Naive thymus-derived CD4-positive, alpha-beta T cell (primary cell): ENCODE measurements at regions of chr7 and their contacts with region 1.

Region 1: GRCh38 chr7:142796608-142797385 is 26.0 kb downstream of the PRSS2 start:
- DNase-seq: peak in 3 of 9 donors; percentile 25 to 45 (median 40)
- ATAC-seq: peak; percentile 2
- H3K4me3 ChIP-seq: peak overlapping the region; percentile 83
- H3K4me3 Mint-ChIP-seq: peak overlapping the region; percentile 95 to 100 (median 99)
- H3K27ac ChIP-seq: peak overlapping the region; percentile 98
- H3K27ac Mint-ChIP-seq: peak overlapping the region; percentile 99 to 100 (median 100)
- H3K4me1 ChIP-seq: peaks cover 43 to 45% of the 10 kb centered on the region in 2 donors
- H3K4me1 Mint-ChIP-seq: peaks cover 29 to 70% (median 67%) of the 10 kb centered on the region in 7 donors
- H3K27me3 ChIP-seq: no peaks in the 10 kb centered on the region
- H3K27me3 Mint-ChIP-seq: peaks cover 0 to 2% (median 0%) of the 10 kb centered on the region in 5 donors

Region 2: GRCh38 chr7:142345811-142346210 is 451.0 kb before region 1 on chr7:
- CTCF ChIA-PET with region 1: no interaction called
- POLR2A ChIA-PET with region 1: interaction called, 66 read pairs
- intact Hi-C with region 1: no loop called
- DNase-seq: peak in 5 of 9 donors; percentile 43 to 61 (median 50)
- ATAC-seq: peak; percentile 67
- H3K4me3 ChIP-seq: peak overlapping the region; percentile 21
- H3K4me3 Mint-ChIP-seq: peak overlapping the region in 7 of 10 donors; percentile 11 to 73 (median 69)
- H3K27ac ChIP-seq: peak overlapping the region; percentile 2
- H3K27ac Mint-ChIP-seq: peak overlapping the region in 7 of 9 donors; percentile 1 to 79 (median 40)
- H3K4me1 ChIP-seq: peaks cover 20 to 26% of the 10 kb centered on the region in 2 donors
- H3K4me1 Mint-ChIP-seq: peaks cover 3 to 42% (median 9%) of the 10 kb centered on the region in 7 donors
- H3K27me3 ChIP-seq: no peaks in the 10 kb centered on the region
- H3K27me3 Mint-ChIP-seq: peaks cover 0 to 26% (median 0%) of the 10 kb centered on the region in 5 donors

Region 3: DNA sequence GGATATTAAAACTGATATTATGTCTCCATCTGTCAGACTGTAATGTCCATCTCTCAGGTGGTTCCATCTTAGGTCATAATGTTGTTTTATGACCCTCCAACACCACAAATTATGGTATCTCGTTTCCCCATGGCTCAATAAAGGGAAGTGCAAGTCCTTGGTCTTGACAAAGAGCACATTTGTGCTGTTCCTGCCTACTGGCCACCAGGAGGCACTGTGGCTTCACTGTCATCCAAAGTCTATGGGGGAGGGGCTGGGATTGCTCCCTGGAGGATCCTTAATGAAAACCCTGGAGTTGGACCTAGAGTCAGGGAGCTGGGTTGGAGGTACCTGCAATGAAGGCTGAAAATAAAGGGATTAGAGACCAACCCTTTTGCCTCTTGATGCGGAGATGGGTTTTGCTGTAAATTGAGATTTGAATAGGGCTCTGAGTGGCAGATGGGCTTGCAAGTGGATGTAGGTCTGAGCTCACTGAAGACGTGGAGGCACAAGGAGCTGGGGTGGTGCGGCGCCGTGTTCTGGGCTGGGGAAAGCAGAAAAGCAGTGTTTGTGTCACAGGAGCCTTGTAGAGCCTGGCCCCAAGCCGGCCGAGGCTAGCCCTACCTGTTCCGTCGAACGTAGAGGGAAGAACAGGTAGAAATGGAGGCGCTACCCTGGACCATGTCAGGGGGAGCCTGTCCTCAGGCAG is 358.4 kb before region 1 on chr7:
- CTCF ChIA-PET with region 1: no interaction called
- POLR2A ChIA-PET with region 1: interaction called, 12 read pairs
- intact Hi-C with region 1: no loop called
- DNase-seq: peak in 4 of 9 donors; percentile 25 to 37 (median 31)
- ATAC-seq: peak; percentile 71
- H3K4me3 ChIP-seq: no peak overlapping the region
- H3K4me3 Mint-ChIP-seq: peak overlapping the region in 2 of 10 donors; percentile 0 to 4
- H3K27ac ChIP-seq: no peak overlapping the region
- H3K27ac Mint-ChIP-seq: peak overlapping the region in 2 of 9 donors; percentile 8 to 11
- H3K4me1 ChIP-seq: peaks cover 6 to 26% of the 10 kb centered on the region in 2 donors
- H3K4me1 Mint-ChIP-seq: peaks cover 39 to 70% (median 66%) of the 10 kb centered on the region in 7 donors
- H3K27me3 ChIP-seq: no peaks in the 10 kb centered on the region
- H3K27me3 Mint-ChIP-seq: no peaks in the 10 kb centered on the region

Region 4: DNA sequence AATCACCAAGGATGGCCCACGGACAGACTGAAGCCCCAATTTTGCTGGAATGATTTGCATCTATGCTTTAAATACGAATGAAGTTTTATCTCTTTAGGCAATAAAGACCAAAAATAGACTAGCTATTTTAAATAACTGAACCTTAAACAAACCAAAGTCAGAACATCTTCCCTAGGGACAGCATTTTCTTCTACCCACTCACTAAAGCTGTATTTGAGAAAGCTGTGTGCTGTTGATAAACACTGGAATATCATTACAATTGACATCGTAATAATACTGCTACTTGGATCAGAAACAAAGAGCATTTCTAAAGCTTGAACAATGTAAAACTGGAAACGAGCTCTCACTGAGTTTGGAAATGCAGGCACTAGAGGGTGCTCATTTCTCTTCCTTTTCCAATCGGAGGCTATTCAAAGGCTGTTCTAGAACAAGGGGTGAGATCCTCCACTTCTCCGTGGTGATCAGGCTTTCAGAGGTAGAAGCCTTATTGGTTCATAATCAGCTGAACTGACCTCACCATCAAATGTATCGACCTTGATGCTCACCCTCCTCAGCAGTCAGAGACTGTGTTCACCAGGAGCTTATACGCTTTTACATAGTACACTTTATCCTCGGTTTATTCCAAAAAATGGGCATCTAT is 272.9 kb before region 1 on chr7:
- CTCF ChIA-PET with region 1: no interaction called
- POLR2A ChIA-PET with region 1: interaction called, 18 read pairs
- intact Hi-C with region 1: no loop called
- DNase-seq: no peak
- ATAC-seq: no peak
- H3K4me3 ChIP-seq: no peak overlapping the region
- H3K4me3 Mint-ChIP-seq: no peak overlapping the region
- H3K27ac ChIP-seq: no peak overlapping the region
- H3K27ac Mint-ChIP-seq: peak overlapping the region in 1 of 9 donors; percentile 52
- H3K4me1 ChIP-seq: peaks cover 0 to 14% of the 10 kb centered on the region in 2 donors
- H3K4me1 Mint-ChIP-seq: peaks cover 11 to 31% (median 22%) of the 10 kb centered on the region in 7 donors
- H3K27me3 ChIP-seq: no peaks in the 10 kb centered on the region
- H3K27me3 Mint-ChIP-seq: peaks cover 0 to 27% (median 0%) of the 10 kb centered on the region in 5 donors

Region 5: DNA sequence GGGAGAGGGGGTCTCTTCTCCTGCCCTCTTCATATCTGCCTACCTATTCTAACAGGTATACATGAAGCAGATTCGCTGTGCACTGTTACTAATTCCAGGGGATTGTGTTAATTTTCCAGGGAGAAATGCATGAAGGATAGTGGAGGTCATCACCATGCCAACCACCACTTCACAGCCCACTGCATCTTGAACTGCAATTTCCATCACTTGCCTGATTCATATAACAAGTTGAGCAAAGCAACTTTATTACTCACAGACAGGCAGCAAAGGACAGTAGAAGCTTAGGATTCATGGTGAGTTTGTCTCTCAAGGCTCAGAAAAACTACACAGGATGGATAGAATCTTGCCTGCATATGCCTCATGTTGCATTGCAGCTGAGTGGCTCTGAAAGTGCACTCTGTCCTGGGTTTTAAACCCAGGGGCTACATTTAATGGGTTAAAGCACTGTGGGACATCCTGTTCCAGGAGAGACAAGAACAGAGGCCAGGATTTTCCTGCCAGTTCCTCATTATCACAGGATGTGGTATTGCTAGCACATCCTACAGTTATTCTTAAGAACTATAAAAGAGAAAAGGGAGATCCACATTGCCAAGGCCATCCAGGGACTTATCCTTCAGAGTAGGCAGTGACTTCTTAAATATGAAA is 184.4 kb before region 1 on chr7:
- CTCF ChIA-PET with region 1: no interaction called
- POLR2A ChIA-PET with region 1: interaction called, 40 read pairs
- intact Hi-C with region 1: loop called (anchors 5 kb)
- DNase-seq: no peak
- ATAC-seq: no peak
- H3K4me3 ChIP-seq: no peak overlapping the region
- H3K4me3 Mint-ChIP-seq: no peak overlapping the region
- H3K27ac ChIP-seq: no peak overlapping the region
- H3K27ac Mint-ChIP-seq: peak overlapping the region in 5 of 9 donors; percentile 5 to 42 (median 38)
- H3K4me1 ChIP-seq: no peaks in the 10 kb centered on the region
- H3K4me1 Mint-ChIP-seq: peaks cover 0 to 45% (median 15%) of the 10 kb centered on the region in 7 donors
- H3K27me3 ChIP-seq: no peaks in the 10 kb centered on the region
- H3K27me3 Mint-ChIP-seq: peaks cover 0 to 8% (median 4%) of the 10 kb centered on the region in 5 donors

Region 6: GRCh38 chr7:142711746-142712619 is 84.8 kb before region 1 on chr7:
- CTCF ChIA-PET with region 1: interaction called, 4 read pairs
- POLR2A ChIA-PET with region 1: interaction called, 89 read pairs
- intact Hi-C with region 1: no loop called
- DNase-seq: no peak
- ATAC-seq: peak; percentile 75
- H3K4me3 ChIP-seq: peak overlapping the region; percentile 46
- H3K4me3 Mint-ChIP-seq: peak overlapping the region; percentile 76 to 94 (median 88)
- H3K27ac ChIP-seq: peak overlapping the region; percentile 62
- H3K27ac Mint-ChIP-seq: peak overlapping the region; percentile 81 to 96 (median 91)
- H3K4me1 ChIP-seq: peaks cover 31 to 50% of the 10 kb centered on the region in 2 donors
- H3K4me1 Mint-ChIP-seq: peaks cover 20 to 76% (median 63%) of the 10 kb centered on the region in 7 donors
- H3K27me3 ChIP-seq: no peaks in the 10 kb centered on the region
- H3K27me3 Mint-ChIP-seq: peaks cover 0 to 1% (median 0%) of the 10 kb centered on the region in 5 donors

Region 7: GRCh38 chr7:142925413-142925812 is 128.6 kb after region 1 on chr7:
- CTCF ChIA-PET with region 1: no interaction called
- POLR2A ChIA-PET with region 1: no interaction called
- intact Hi-C with region 1: no loop called
- DNase-seq: no peak
- ATAC-seq: no peak
- H3K4me3 ChIP-seq: no peak overlapping the region
- H3K4me3 Mint-ChIP-seq: no peak overlapping the region
- H3K27ac ChIP-seq: no peak overlapping the region
- H3K27ac Mint-ChIP-seq: no peak overlapping the region
- H3K4me1 ChIP-seq: no peaks in the 10 kb centered on the region
- H3K4me1 Mint-ChIP-seq: peaks cover 0 to 2% (median 0%) of the 10 kb centered on the region in 7 donors
- H3K27me3 ChIP-seq: no peaks in the 10 kb centered on the region
- H3K27me3 Mint-ChIP-seq: peaks cover 0 to 6% (median 0%) of the 10 kb centered on the region in 5 donors